CD8-positive, alpha-beta T cell (primary cell): ENCODE measurements at regions of chr14 and their contacts with region 1.

Region 1: GRCh38 chr14:104339829-104340228 is 201.4 kb downstream of the KIF26A start:
- DNase-seq: no peak
- ATAC-seq: no peak
- H3K4me3 ChIP-seq: no peak overlapping the region
- H3K4me3 Mint-ChIP-seq: no peak overlapping the region
- H3K27ac ChIP-seq: no peak overlapping the region
- H3K27ac Mint-ChIP-seq: no peak overlapping the region
- H3K4me1 ChIP-seq: no peaks in the 10 kb centered on the region
- H3K4me1 Mint-ChIP-seq: peaks cover 2% of the 10 kb centered on the region
- H3K27me3 ChIP-seq: no peaks in the 10 kb centered on the region
- H3K27me3 Mint-ChIP-seq: peaks cover 5% of the 10 kb centered on the region
- CTCF ChIP-seq: no peak

Region 2: DNA sequence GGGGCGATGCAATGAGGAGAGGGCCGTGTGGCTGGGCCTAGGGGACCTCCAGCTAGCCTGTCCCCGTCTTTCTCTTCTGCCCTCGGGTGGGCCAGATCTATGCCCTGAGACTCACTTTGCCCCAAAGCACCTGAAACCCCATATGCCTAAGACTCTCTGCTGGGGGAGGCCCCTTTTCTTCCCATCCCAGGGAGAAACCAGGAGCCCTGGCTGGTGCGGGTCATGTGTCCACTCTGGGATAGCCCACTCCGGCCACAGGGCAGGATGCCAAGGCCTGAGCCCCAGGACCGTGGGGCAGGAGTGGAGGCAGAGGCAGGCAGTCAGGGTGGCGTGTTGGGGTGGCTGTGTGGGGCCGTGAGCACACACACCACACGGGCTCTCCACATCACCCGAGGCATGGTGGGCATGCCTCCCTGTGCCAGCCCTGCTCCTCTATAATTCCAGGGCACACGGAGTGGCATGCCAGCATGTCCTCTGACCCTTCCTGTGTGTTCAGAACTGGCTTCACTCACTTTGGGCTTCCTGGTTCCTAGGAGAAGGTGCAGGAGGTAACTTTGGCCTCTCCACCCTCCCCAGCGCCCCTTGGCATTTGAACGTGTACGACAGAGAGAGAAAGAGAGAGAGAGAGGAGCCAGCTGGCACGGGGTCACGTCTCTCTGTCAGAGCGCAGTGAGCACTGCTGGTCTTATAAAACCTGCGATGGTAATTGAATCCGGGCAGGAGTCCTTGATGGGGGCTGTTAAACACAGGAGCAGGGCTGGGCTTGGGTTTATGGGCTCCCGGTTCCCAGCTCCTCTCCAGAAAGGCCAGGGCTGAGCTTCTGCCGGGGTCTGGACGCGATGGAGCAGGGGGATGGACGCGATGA is 57.3 kb before region 1 on chr14:
- CTCF ChIA-PET with region 1: no interaction called
- POLR2A ChIA-PET with region 1: no interaction called
- intact Hi-C with region 1: no loop called
- DNase-seq: no peak
- ATAC-seq: no peak
- H3K4me3 ChIP-seq: no peak overlapping the region
- H3K4me3 Mint-ChIP-seq: no peak overlapping the region
- H3K27ac ChIP-seq: no peak overlapping the region
- H3K27ac Mint-ChIP-seq: no peak overlapping the region
- H3K4me1 ChIP-seq: no peaks in the 10 kb centered on the region
- H3K4me1 Mint-ChIP-seq: no peaks in the 10 kb centered on the region
- H3K27me3 ChIP-seq: no peaks in the 10 kb centered on the region
- H3K27me3 Mint-ChIP-seq: peaks cover 5% of the 10 kb centered on the region
- CTCF ChIP-seq: no peak

Region 3: GRCh38 chr14:104314251-104314941 is 25.4 kb before region 1 on chr14:
- CTCF ChIA-PET with region 1: no interaction called
- POLR2A ChIA-PET with region 1: no interaction called
- intact Hi-C with region 1: loop called in 1 of 2 experiments (anchors 2 kb)
- DNase-seq: no peak
- ATAC-seq: no peak
- H3K4me3 ChIP-seq: no peak overlapping the region
- H3K4me3 Mint-ChIP-seq: no peak overlapping the region
- H3K27ac ChIP-seq: no peak overlapping the region
- H3K27ac Mint-ChIP-seq: no peak overlapping the region
- H3K4me1 ChIP-seq: no peaks in the 10 kb centered on the region
- H3K4me1 Mint-ChIP-seq: no peaks in the 10 kb centered on the region
- H3K27me3 ChIP-seq: no peaks in the 10 kb centered on the region
- H3K27me3 Mint-ChIP-seq: no peaks in the 10 kb centered on the region
- CTCF ChIP-seq: no peak

Region 4: GRCh38 chr14:104356020-104356737 is 16.4 kb after region 1 on chr14:
- CTCF ChIA-PET with region 1: no interaction called
- POLR2A ChIA-PET with region 1: no interaction called
- intact Hi-C with region 1: no loop called
- DNase-seq: no peak
- ATAC-seq: no peak
- H3K4me3 ChIP-seq: no peak overlapping the region
- H3K4me3 Mint-ChIP-seq: no peak overlapping the region
- H3K27ac ChIP-seq: no peak overlapping the region
- H3K27ac Mint-ChIP-seq: no peak overlapping the region
- H3K4me1 ChIP-seq: no peaks in the 10 kb centered on the region
- H3K4me1 Mint-ChIP-seq: peaks cover 2% of the 10 kb centered on the region
- H3K27me3 ChIP-seq: no peaks in the 10 kb centered on the region
- H3K27me3 Mint-ChIP-seq: no peaks in the 10 kb centered on the region
- CTCF ChIP-seq: no peak